ENCODE measurements at regions of chr20 and their contacts with region 1.

Region 1: DNA sequence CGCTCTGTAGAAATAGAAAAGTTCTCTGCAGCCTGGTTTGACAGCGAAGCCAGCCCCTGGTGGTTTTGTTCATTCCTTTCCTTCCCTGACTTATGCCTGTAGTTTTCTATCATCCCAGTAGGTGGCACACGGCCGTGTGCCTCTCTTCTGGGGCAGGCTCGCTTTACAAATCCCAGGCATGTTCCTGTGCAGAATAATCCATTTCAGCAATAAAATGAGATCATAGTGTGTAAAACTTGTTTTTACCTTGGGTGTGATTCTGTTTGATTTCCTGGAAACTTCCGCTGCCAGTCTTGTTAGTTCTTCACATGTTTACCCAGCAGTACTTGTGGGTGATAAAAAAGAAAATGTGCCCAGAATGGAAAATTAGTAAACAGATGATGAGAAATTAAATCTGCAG is 7.4 kb upstream of the INSM1 start:
- DNase-seq: peak in 6 of 10 donors; percentile 26 to 62 (median 54)
- H3K4me3 ChIP-seq: peak overlapping the region in 1 of 59 donors; percentile 20
- H3K27ac ChIP-seq: peak overlapping the region in 5 of 59 donors; percentile 2 to 47 (median 18)
- H3K27me3 ChIP-seq: peaks cover 0 to 37% (median 17%) of the 10 kb centered on the region in 45 donors
- CTCF ChIP-seq: peak; percentile 56 to 91 (median 82)

Region 2: DNA sequence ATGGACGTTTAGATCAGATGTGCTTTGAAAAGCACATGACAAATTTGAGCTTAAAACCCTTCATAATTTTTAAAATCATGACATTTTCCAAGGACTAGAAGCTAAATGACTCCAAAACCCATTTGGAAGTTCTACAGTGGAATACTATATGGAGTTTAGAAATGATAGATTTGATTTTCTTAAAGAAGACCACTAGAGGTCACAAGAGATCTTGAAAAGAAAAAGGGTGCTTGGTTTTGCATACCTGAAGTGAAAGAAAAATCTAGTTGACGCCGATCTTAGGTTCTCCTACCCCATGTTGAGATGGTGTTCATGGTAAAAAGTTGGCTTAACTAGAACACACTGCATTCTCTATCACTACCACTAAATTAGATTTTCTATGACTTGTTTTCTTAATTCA is 276.7 kb before region 1 on chr20:
- intact Hi-C with region 1: loop called in 1 of 2 experiments (anchors 10 kb)
- DNase-seq: no peak
- H3K4me3 ChIP-seq: peak overlapping the region in 11 of 59 donors; percentile 3 to 41 (median 30)
- H3K27ac ChIP-seq: peak overlapping the region in 4 of 59 donors; percentile 1 to 46 (median 36)
- H3K27me3 ChIP-seq: no peaks in the 10 kb centered on the region
- CTCF ChIP-seq: peak; percentile 44 to 86 (median 68)

Region 3: GRCh38 chr20:20407891-20408805 is 47.7 kb after region 1 on chr20:
- intact Hi-C with region 1: loop called in 1 of 2 experiments (anchors 2 kb)
- DNase-seq: peak in 5 of 10 donors; percentile 36 to 68 (median 61)
- H3K4me3 ChIP-seq: peak overlapping the region in 14 of 59 donors; percentile 0 to 45 (median 18)
- H3K27ac ChIP-seq: peak overlapping the region in 54 of 59 donors; percentile 6 to 85 (median 57)
- H3K27me3 ChIP-seq: no peaks in the 10 kb centered on the region
- CTCF ChIP-seq: peak in 49 of 56 donors; percentile 17 to 58 (median 37)

Region 4: DNA sequence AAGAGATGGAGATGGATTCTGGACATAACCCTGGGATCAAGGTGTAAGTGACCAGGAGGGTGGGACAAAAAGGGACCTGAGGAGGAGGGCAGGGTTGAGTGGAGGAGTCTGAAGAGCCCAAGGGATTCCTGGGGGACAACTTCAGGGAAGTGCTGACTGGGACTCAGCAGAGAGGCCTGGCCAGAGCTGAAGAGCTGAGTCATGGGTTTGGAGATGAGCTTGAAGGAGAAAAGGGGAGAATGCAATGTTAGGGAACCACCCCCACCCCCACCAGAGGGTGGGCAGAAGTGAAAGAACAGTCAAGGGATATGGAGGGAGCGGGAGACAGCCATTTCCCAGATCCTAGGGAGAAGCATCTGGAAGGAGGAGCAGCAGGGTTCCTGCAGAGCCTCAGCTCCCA is 62.7 kb after region 1 on chr20:
- intact Hi-C with region 1: no loop called
- DNase-seq: no peak
- H3K4me3 ChIP-seq: no peak overlapping the region
- H3K27ac ChIP-seq: no peak overlapping the region
- H3K27me3 ChIP-seq: no peaks in the 10 kb centered on the region
- CTCF ChIP-seq: no peak

Region 5: DNA sequence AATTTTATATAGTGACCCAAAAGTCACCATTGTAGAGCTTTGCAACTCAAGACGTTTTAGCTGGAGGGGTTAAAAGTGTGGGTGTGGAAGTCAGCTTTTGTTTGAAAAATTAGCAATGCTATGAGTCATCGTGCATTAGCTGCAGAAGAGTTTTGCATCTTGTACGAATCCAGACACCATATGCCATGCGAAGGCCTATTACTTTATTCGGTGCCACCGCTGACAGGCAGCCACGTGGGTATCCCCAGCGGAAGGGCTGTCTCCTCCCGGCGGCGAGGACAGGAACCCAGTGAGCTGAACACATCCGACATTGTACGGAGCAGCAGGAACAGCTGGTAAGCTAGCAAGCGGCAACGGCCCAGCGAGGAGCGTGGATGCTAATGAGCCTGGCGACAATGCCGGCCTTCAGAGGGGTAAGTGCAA is 91.8 kb after region 1 on chr20:
- intact Hi-C with region 1: loop called in 1 of 2 experiments (anchors 5 kb)
- DNase-seq: peak; percentile 66 to 98 (median 96)
- H3K4me3 ChIP-seq: peak overlapping the region in 53 of 59 donors; percentile 2 to 55 (median 31)
- H3K27ac ChIP-seq: peak overlapping the region in 58 of 59 donors; percentile 20 to 92 (median 82)
- H3K27me3 ChIP-seq: no peaks in the 10 kb centered on the region
- CTCF ChIP-seq: peak in 41 of 56 donors; percentile 9 to 62 (median 32)

Region 6: DNA sequence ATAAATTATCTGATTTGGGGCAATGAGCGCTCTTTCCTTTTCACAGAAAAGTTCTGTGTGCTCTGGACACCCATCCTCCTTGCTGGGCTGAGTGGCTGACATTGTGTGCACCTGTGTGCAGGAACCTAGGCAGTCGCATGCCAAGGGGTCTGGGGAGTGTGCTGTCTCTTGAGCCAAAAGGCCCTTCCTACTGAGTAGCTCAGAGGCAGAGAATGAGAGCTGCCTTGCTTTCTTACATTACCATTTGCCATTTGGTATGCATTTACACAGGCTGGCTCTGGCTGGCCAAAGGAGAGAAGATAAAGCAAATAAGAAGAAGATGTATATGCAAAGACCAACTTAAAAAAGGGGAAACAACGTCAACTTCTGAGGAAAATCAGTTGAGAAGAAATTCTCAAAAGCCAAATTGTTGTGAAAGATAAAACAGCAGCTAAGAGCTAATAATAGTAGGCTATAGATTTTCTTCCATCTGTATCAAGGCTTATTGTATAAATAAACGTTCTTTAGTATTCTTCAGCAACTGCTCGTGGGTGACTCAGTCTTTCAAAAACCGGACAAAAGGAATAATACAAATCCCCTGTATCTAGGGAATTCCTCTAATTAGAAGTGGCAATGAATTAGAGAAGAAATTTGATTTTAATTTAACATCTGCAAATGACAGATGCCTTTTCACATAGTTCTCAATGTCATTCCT is 129.3 kb after region 1 on chr20:
- intact Hi-C with region 1: loop called in 1 of 2 experiments (anchors 10 kb)
- DNase-seq: no peak
- H3K4me3 ChIP-seq: no peak overlapping the region
- H3K27ac ChIP-seq: peak overlapping the region in 14 of 59 donors; percentile 3 to 64 (median 42)
- H3K27me3 ChIP-seq: no peaks in the 10 kb centered on the region
- CTCF ChIP-seq: no peak

Region 7: GRCh38 chr20:20568604-20569205 is 208.2 kb after region 1 on chr20:
- intact Hi-C with region 1: loop called (anchors 5 to 10 kb)
- DNase-seq: peak in 7 of 10 donors; percentile 30 to 62 (median 58)
- H3K4me3 ChIP-seq: no peak overlapping the region
- H3K27ac ChIP-seq: no peak overlapping the region
- H3K27me3 ChIP-seq: no peaks in the 10 kb centered on the region
- CTCF ChIP-seq: peak; percentile 61 to 99 (median 82)

Region 8: DNA sequence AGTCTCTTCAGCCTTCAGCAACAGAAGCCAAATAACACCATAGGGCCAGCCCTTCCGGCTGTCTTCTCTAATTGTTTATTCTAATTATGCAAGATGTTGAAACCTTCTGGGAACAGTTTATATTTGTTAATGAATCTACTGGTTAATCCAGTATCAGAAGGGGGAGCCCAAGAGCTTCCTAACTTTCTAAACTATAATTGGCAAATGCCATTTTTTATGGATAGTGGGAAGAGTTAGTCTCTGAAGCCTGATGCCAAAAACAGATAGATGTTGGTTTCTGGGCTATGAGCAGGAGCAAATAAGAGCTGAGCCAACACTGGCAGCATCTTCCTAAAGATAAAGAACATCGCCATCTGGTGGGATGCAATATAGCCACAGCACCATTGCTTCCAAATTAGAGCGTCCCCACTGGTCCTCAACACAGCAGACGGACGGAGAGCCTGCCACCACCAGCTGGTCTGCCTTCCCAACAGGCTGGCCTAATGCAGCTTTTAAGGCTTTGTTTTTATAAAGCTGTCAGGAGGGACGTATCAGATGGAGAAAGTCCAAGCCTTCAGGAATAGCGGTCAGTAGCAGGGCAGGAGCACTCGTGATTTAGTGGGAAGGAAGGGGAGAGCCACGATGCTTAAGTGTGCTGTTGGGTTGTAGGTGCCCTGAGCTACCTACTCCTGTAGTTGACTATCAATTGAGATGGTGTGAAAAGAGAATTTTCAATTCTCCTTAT is 233.1 kb after region 1 on chr20:
- intact Hi-C with region 1: loop called in 1 of 2 experiments (anchors 5 kb)
- DNase-seq: peak in 9 of 10 donors; percentile 19 to 80 (median 52)
- H3K4me3 ChIP-seq: peak overlapping the region in 14 of 59 donors; percentile 2 to 39 (median 15)
- H3K27ac ChIP-seq: peak overlapping the region in 49 of 59 donors; percentile 4 to 80 (median 58)
- H3K27me3 ChIP-seq: no peaks in the 10 kb centered on the region
- CTCF ChIP-seq: peak in 55 of 56 donors; percentile 24 to 66 (median 51)

Measured in dorsolateral prefrontal cortex (tissue), 120 donors.